Esophagus squamous epithelium (tissue), 5 donors: ENCODE measurements at regions of chr17 and their contacts with region 1.

Region 1: DNA sequence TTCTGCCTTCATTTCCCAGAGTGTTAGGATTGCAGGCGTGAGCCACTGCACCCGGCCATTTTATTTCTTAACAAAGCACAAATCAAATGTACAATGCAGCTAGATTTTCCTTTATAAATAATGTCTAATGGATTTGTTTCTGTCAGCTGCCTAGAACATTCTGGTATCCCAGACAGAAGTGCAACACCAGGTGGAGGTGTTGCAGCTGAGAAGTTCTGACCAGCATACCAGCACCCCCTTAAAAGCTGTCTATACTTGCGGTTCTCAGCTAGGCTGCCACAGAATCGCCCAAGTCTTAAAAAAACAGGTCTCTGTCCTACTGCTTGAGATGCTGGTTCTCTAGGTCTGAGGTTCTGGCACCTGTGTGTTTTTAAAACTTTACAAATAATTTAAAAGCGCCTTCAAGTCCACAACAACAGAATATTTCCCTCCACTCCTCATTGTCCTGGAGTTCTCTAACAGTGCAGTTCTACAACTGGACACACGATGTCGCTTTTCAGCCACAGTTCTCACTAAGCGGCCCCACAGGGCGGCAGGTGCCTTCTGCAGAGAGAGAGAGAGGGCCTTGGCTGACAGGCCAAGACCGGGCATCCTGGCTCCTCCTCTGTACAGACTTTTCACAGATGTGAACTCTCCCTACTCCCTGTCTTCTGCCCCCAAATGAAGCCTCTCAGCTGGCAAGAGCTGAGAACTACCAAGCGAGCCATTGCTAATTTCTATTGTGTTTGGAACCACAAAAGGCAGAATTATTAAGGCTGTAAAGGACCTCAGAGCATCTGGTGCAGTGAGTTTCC is 32.6 kb upstream of the MEOX1 start:
- DNase-seq: peak; percentile 10
- H3K4me3 ChIP-seq: no peak overlapping the region
- H3K27ac ChIP-seq: no peak overlapping the region
- H3K4me1 ChIP-seq: peaks cover 0 to 12% (median 11%) of the 10 kb centered on the region in 3 donors
- H3K27me3 ChIP-seq: peaks cover 0 to 5% (median 0%) of the 10 kb centered on the region in 4 donors
- CTCF ChIP-seq: peak; percentile 76 to 98 (median 96)
- POLR2A ChIP-seq: no peak

Region 2: DNA sequence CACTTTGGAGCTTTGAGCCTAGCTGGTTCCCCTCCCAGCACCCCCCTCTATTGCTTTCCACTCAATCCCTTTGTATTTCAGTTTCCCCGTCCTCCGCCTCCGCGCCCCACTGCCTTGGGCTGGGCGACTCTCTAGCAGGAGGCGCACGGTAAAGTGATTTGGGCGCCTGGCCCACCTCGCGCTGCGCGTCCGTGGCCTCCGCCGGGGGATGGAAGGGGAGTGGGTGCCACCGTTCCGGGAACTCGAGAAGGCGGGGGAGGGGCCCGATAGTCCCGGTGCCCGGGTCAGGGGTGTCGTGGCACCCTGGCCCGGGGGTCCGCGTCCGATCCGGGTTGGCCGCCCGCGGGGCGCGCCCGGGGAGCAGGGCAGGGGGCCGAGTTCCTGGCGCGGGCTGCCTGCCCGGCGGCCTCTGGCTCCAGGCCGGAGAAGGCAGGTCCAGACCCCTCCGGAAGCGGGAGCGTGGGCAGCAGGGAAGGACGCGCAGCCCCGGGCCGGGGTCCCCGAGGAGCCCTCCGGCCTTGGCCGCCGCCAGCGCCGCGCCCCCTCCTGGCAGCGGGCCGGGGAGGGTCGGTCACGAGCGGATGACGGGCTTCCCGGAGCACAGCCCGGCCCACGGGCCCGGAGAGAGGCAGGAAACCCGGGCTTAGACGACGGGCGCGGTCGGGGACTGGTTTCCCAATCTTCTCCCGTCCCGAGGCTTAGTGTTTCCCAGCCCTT is 48.4 kb before region 1 on chr17:
- intact Hi-C with region 1: no loop called
- DNase-seq: no peak
- H3K4me3 ChIP-seq: peak overlapping the region; percentile 38 to 75 (median 57)
- H3K27ac ChIP-seq: peak overlapping the region; percentile 75 to 90 (median 84)
- H3K4me1 ChIP-seq: peaks cover 8 to 27% (median 9%) of the 10 kb centered on the region in 3 donors
- H3K27me3 ChIP-seq: peaks cover 0 to 4% (median 0%) of the 10 kb centered on the region in 4 donors
- CTCF ChIP-seq: peak in 1 of 6 experiments; percentile 35
- POLR2A ChIP-seq: peak in 1 of 4 donors; percentile 28

Region 3: GRCh38 chr17:43758497-43759174 is 64.4 kb after region 1 on chr17 and contains the start of gene SOST:
- intact Hi-C with region 1: loop called (anchors 2 kb)
- DNase-seq: no peak
- H3K4me3 ChIP-seq: no peak within 1 kb of the TSS
- H3K27ac ChIP-seq: no peak within 1 kb of the TSS
- H3K4me1 ChIP-seq: peaks cover 8 to 27% (median 13%) of the 10 kb centered on the region in 3 donors
- H3K27me3 ChIP-seq: peaks cover 0 to 51% (median 7%) of the 10 kb centered on the region in 4 donors
- CTCF ChIP-seq: no peak
- POLR2A ChIP-seq: no peak
- total RNA-seq, gene SOST: 0.49 TPM in 1 of 4 donors, not detected in the others

Region 4: GRCh38 chr17:43857942-43858600 is 163.8 kb after region 1 on chr17:
- intact Hi-C with region 1: loop called (anchors 10 kb)
- DNase-seq: no peak
- H3K4me3 ChIP-seq: no peak overlapping the region
- H3K27ac ChIP-seq: peak overlapping the region in 1 of 4 donors; percentile 6
- H3K4me1 ChIP-seq: peaks cover 0 to 22% (median 6%) of the 10 kb centered on the region in 3 donors
- H3K27me3 ChIP-seq: peaks cover 0 to 53% (median 0%) of the 10 kb centered on the region in 4 donors
- CTCF ChIP-seq: no peak
- POLR2A ChIP-seq: no peak

Region 5: DNA sequence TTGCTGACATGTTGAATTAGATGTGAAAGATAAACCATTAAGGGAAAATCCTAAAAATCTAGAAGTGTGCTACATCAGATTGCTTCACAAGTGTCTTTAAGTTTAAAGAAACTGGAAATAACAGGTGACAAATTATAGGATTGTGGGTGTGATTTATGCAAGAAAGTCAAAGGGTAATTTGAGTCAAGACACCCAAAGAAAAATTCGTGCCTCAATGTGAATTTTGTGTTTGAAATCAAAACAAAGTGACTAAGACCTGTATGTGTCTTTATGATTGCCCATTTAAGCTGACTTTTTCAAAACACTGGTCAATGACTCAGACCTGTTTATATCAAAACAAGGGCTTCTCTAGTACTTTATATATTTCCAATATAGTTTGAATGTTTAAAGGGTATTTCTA is 264.7 kb after region 1 on chr17:
- intact Hi-C with region 1: no loop called
- DNase-seq: no peak
- H3K4me3 ChIP-seq: no peak overlapping the region
- H3K27ac ChIP-seq: no peak overlapping the region
- H3K4me1 ChIP-seq: no peaks in the 10 kb centered on the region
- H3K27me3 ChIP-seq: peaks cover 0 to 58% (median 0%) of the 10 kb centered on the region in 4 donors
- CTCF ChIP-seq: no peak
- POLR2A ChIP-seq: no peak